ENCODE measurements at regions of chr10 and their contacts with region 1.

Region 1: GRCh38 chr10:84352251-84352842 is 24.0 kb downstream of the CCSER2 start:
- DNase-seq: peak in 1 of 2 experiments; percentile 74
- H3K4me3 ChIP-seq: no peak overlapping the region
- H3K27ac ChIP-seq: no peak overlapping the region
- H3K4me1 ChIP-seq: peaks cover 0 to 8% (median 3%) of the 10 kb centered on the region in 4 experiments; a peak in 4 of 7 replicates
- H3K27me3 ChIP-seq: no peaks in the 10 kb centered on the region
- CTCF ChIP-seq: peak; percentile 73 to 92 (median 88)
- EP300 ChIP-seq: no peak
- POLR2A ChIP-seq: no peak
- RAD21 ChIP-seq: peak; percentile 73 to 83

Region 2: GRCh38 chr10:84328418-84329195 is 23.7 kb before region 1 on chr10 and contains the start of gene CCSER2:
- CTCF ChIA-PET with region 1: interaction called, 13 read pairs
- POLR2A ChIA-PET with region 1: interaction called, 3 read pairs
- DNase-seq: peak; percentile 77 to 99
- H3K4me3 ChIP-seq: peak within 1 kb of the TSS; percentile 61 to 83 (median 78)
- H3K27ac ChIP-seq: peak within 1 kb of the TSS; percentile 78
- H3K4me1 ChIP-seq: peaks cover 3 to 6% (median 3%) of the 10 kb centered on the region in 4 experiments; a peak in 6 of 7 replicates
- H3K27me3 ChIP-seq: no peaks in the 10 kb centered on the region
- CTCF ChIP-seq: peak in 1 of 3 experiments; percentile 7; a peak in 1 of 4 replicates
- EP300 ChIP-seq: no peak
- POLR2A ChIP-seq: peak in 1 of 2 experiments; percentile 73; a peak in 2 of 3 replicates
- RAD21 ChIP-seq: no peak
- total RNA-seq, gene CCSER2: 30.5 and 32.4 TPM in 2 replicates

Region 3: DNA sequence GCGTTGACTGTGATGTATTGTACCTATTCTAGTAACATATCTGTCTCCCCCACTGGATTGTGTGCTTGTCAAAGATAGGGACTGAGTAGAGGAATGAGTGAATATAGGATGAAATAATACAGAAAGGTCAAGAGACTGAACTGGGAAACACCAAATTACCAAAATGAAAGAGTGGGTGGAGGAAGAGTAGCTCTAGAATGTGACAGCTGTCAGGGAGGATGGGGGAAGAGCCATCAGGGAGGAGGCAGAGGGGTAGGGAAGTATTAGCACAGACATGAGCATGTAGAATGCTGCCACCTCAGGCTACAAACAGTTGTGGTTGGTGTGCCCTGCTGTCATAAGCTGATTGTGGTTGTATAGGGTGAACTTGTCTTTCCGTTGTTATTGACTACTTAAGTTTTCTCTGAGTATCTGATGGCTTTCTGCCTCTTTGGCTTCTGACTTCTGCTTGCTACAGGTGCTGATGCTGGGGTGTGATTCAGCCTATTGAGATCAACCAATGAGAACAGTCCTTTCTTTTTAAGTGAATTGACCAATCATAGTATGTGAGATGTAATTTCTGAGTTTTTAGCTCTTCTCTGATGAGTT is 18.4 kb before region 1 on chr10:
- CTCF ChIA-PET with region 1: interaction called, 21 read pairs
- POLR2A ChIA-PET with region 1: no interaction called
- DNase-seq: no peak
- H3K4me3 ChIP-seq: no peak overlapping the region
- H3K27ac ChIP-seq: no peak overlapping the region
- H3K4me1 ChIP-seq: peaks cover 0 to 11% (median 8%) of the 10 kb centered on the region in 4 experiments; a peak in 3 of 7 replicates
- H3K27me3 ChIP-seq: no peaks in the 10 kb centered on the region
- CTCF ChIP-seq: no peak
- EP300 ChIP-seq: no peak
- POLR2A ChIP-seq: no peak
- RAD21 ChIP-seq: no peak

Region 4: GRCh38 chr10:84341538-84341856 is 10.8 kb before region 1 on chr10:
- CTCF ChIA-PET with region 1: interaction called, 31 read pairs
- POLR2A ChIA-PET with region 1: interaction called, 4 read pairs
- DNase-seq: no peak
- H3K4me3 ChIP-seq: no peak overlapping the region; a peak in 1 of 8 replicates
- H3K27ac ChIP-seq: no peak overlapping the region
- H3K4me1 ChIP-seq: peaks cover 0 to 13% (median 7%) of the 10 kb centered on the region in 4 experiments; a peak in 4 of 7 replicates
- H3K27me3 ChIP-seq: no peaks in the 10 kb centered on the region
- CTCF ChIP-seq: peak in 2 of 3 experiments; percentile 33 to 36; a peak in 3 of 4 replicates
- EP300 ChIP-seq: no peak
- POLR2A ChIP-seq: no peak
- RAD21 ChIP-seq: peak in 1 of 2 experiments; percentile 23; a peak in 1 of 4 replicates

Region 5: GRCh38 chr10:84401854-84402611 is 49.7 kb after region 1 on chr10:
- CTCF ChIA-PET with region 1: no interaction called
- POLR2A ChIA-PET with region 1: no interaction called
- DNase-seq: no peak
- H3K4me3 ChIP-seq: no peak overlapping the region
- H3K27ac ChIP-seq: no peak overlapping the region
- H3K4me1 ChIP-seq: peaks cover 0 to 6% (median 0%) of the 10 kb centered on the region in 4 experiments; a peak in 3 of 7 replicates
- H3K27me3 ChIP-seq: no peaks in the 10 kb centered on the region
- CTCF ChIP-seq: no peak
- EP300 ChIP-seq: no peak
- POLR2A ChIP-seq: no peak
- RAD21 ChIP-seq: no peak

Measured in H1 (cell line).